ENCODE measurements at regions of chr9 and their contacts with region 1.

Region 1: GRCh38 chr9:124617471-124618141 is 110.4 kb upstream of the NR5A1 start:
- H3K4me3 ChIP-seq: no peak overlapping the region
- H3K27ac ChIP-seq: no peak overlapping the region
- H3K4me1 ChIP-seq: peaks cover 10% of the 10 kb centered on the region
- CTCF ChIP-seq: peak; percentile 68

Region 2: DNA sequence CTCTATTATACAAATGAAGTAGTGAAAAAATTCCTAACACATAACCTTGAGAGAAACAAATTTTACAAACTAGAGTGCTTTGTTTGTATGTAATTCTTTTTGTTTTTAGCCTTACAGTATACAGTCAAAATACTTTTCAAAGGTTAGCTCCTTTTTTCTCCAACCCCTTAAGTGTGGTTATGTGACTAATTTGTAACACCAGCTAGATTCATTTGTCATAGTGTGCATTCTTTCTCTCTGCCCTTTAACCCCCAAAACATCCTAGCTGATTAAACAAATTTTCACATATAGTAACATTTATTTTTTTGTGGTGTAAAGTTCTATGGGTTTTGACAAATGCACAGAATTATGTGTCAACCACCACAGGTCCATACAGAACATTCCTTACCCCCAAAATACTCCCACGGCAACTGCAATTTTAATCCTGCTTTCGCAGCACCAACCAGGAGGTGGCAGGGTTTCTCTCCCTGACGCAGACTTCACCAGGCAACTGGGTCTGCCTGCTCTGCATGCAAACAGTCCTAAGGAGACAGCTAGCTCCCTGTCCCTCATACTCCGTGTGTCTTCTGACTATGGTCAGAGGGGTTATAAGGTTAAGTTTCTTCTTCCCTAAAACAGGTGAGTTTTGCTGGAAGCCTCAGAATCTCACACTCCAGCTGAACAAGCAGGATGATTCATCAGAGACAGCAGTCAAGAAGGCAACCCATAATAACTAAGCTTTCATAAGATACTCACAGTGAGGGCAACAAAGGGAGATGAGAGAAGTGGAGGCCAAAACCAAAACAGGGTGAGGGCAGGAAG is 65.9 kb before region 1 on chr9:
- CTCF ChIA-PET with region 1: interaction called, 71 read pairs
- POLR2A ChIA-PET with region 1: interaction called, 4 read pairs
- H3K4me3 ChIP-seq: no peak overlapping the region
- H3K27ac ChIP-seq: no peak overlapping the region
- H3K4me1 ChIP-seq: no peaks in the 10 kb centered on the region
- CTCF ChIP-seq: peak; percentile 39; the same call in 1 of the 2 replicates

Region 3: DNA sequence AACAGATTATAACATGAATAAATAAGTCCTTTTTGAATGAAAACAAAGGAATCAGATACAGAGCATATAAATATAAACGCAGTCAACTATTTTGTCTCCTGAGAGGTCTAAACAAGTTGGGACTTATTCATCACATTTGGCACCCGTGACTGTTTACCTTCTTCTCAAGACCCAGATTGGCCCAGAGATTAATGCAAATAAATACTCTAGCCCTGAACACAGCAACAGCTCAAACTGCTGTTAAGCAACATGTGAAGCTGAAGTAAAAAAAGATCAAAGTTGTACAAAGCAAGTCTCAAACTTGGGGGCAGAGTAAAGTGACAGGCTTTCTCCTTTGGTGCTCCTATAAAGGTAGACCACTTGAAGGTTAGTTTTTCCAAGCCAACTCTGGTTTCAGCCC is 15.4 kb before region 1 on chr9:
- CTCF ChIA-PET with region 1: interaction called, 43 read pairs
- POLR2A ChIA-PET with region 1: no interaction called
- H3K4me3 ChIP-seq: no peak overlapping the region
- H3K27ac ChIP-seq: peak overlapping the region; percentile 30; the same call in 1 of the 2 replicates
- H3K4me1 ChIP-seq: no peaks in the 10 kb centered on the region
- CTCF ChIP-seq: no peak

Region 4: DNA sequence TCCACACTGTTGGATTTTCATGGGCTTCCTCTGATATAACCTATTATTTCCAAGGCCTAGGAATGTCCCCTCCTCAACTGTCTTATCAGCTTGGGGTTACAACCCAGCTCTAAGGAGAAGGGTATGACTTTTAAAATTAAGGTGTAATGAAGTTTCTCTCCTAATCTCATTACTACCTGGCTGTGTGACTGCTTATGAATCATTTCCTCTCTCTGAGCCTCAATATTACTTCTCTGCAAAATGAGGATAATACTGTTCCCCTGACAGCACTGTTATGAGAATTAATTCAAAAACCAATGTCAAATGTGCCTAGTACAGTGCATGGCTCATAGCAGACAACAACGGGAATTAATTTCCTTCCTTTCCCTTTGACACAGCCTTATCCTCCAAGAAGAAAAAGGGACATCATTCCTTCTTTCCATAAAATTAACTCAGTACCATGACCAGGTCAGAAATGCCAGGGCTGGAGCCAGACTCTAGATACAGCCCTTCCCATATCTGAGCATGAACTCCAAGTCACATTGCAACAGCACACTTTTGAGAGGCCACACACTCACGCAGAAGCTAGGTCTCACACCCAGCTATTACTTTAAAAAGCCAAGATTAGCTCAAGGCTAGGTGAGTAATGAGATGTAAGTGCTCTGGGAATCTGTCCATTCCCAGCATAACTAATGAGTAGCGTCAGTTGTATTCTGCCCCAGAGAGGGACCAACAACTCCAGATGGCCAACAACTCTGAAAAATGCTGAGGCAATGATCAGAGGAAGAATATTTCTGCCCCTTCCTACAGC is 34.8 kb after region 1 on chr9:
- CTCF ChIA-PET with region 1: interaction called, 65 read pairs
- POLR2A ChIA-PET with region 1: no interaction called
- H3K4me3 ChIP-seq: no peak overlapping the region
- H3K27ac ChIP-seq: no peak overlapping the region
- H3K4me1 ChIP-seq: peaks cover 2% of the 10 kb centered on the region; the same call in 1 of the 2 replicates
- CTCF ChIP-seq: no peak

Region 5: DNA sequence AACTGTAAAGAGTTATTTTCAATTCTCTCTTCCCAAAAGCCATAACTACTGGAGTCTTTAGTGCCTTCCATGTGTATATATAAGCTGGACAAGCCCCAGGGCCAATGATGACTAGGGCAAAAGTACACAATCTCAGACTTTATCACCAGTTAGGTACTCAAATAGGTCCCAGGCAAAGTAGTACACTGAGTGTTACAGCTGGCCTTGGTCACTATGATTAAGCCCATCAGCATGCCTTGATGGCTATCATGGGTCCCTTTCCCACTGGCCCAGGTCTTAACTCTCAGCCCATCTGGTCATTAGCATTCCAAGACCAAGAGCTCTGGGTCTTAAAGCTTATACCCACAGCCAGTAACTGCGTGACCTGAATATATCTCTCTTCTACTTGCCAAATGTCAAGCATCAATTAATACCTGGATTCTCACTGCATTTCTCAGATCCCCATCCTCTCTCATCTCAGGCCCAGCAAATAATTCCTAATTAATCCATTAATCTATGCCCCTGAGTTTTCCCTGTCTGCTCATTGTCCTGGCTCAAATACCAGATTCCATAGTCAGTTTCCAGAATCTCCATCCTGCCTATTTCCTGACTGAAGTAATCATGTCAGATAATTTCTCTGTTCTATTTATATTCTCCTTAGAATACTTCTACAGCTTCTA is 91.2 kb after region 1 on chr9:
- CTCF ChIA-PET with region 1: interaction called, 236 read pairs
- POLR2A ChIA-PET with region 1: no interaction called
- H3K4me3 ChIP-seq: no peak overlapping the region
- H3K27ac ChIP-seq: no peak overlapping the region
- H3K4me1 ChIP-seq: no peaks in the 10 kb centered on the region
- CTCF ChIP-seq: no peak

Region 6: DNA sequence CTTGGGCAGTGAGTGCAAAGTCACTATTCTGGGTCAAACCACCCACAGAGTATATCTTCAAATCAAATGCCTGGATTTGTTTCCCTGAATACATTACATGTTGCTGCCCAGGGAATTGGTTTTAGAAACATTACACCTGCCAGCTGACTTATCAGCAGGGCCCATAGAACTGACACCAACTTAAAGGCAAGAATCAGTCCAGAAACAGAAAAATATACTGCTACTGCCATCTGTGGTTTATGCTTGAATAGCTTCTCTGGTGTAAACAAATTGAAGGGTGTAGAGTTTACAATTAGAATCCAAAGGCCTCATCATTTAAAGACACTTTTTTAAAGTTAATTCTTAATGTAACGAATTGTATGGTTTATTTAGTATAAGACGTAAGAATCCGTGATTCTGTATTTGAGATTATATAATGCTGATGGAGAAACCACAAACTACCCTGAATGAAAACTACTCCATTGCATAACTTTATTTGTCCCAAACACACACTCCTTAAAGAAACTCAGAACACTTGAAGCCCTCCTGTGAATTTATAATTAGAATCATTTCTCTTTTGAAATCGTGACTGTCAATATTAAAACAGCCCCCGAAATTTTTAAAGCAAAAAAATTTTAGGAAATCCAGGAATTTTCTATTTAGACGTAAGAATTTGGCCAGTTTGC is 147.3 kb after region 1 on chr9:
- CTCF ChIA-PET with region 1: interaction called, 43 read pairs
- POLR2A ChIA-PET with region 1: no interaction called
- H3K4me3 ChIP-seq: no peak overlapping the region
- H3K27ac ChIP-seq: no peak overlapping the region
- H3K4me1 ChIP-seq: peaks cover 27% of the 10 kb centered on the region
- CTCF ChIP-seq: no peak

Region 7: GRCh38 chr9:125261501-125262293 is 644.1 kb after region 1 on chr9 and contains the start of gene GAPVD1:
- CTCF ChIA-PET with region 1: no interaction called
- POLR2A ChIA-PET with region 1: no interaction called
- H3K4me3 ChIP-seq: peak within 1 kb of the TSS; percentile 99
- H3K27ac ChIP-seq: peak within 1 kb of the TSS; percentile 80
- H3K4me1 ChIP-seq: no peaks in the 10 kb centered on the region
- CTCF ChIP-seq: peak; percentile 72

Measured in HEK293 (cell line).